Transverse colon (tissue), 4 donors: ENCODE measurements at regions of chr7 and their contacts with region 1.

Region 1: DNA sequence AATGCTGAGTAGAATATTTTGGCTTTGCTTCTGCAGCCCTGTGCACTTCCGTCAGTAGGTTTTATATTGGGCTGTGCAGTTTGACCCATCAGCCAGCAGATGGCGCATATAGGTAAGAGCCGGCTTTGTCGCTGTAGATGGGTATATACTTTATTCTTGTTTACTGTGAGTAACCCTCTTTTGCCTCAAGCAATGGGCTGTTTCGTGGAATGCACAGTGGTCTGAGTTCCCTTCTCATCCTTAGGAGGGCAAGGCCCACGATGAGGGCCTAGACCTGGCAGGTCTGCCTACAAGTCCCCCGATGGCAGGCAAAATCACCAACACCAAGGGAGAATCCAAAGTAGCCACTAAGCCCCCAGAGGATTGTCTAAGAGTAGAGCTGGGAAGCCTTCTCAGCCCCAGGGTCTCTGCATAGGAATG is 1002.9 kb upstream of the KCND2 start:
- DNase-seq: peak; percentile 19
- H3K4me3 ChIP-seq: no peak overlapping the region
- H3K27ac ChIP-seq: no peak overlapping the region
- H3K4me1 ChIP-seq: no peaks in the 10 kb centered on the region
- H3K27me3 ChIP-seq: no peaks in the 10 kb centered on the region
- CTCF ChIP-seq: peak; percentile 51 to 75 (median 61)
- EP300 ChIP-seq: no peak
- POLR2A ChIP-seq: no peak

Region 2: GRCh38 chr7:119167431-119167830 is 102.6 kb before region 1 on chr7:
- in situ Hi-C with region 1: no loop called
- intact Hi-C with region 1: no loop called
- DNase-seq: no peak
- H3K4me3 ChIP-seq: no peak overlapping the region
- H3K27ac ChIP-seq: no peak overlapping the region
- H3K4me1 ChIP-seq: no peaks in the 10 kb centered on the region
- H3K27me3 ChIP-seq: no peaks in the 10 kb centered on the region
- CTCF ChIP-seq: no peak
- EP300 ChIP-seq: no peak
- POLR2A ChIP-seq: no peak

Region 3: GRCh38 chr7:120547605-120548004 is 1277.5 kb after region 1 on chr7:
- in situ Hi-C with region 1: loop called in 1 of 4 experiments (anchors 25 kb)
- intact Hi-C with region 1: no loop called
- DNase-seq: no peak
- H3K4me3 ChIP-seq: no peak overlapping the region
- H3K27ac ChIP-seq: no peak overlapping the region
- H3K4me1 ChIP-seq: no peaks in the 10 kb centered on the region
- H3K27me3 ChIP-seq: no peaks in the 10 kb centered on the region
- CTCF ChIP-seq: no peak
- EP300 ChIP-seq: no peak
- POLR2A ChIP-seq: no peak